Breast epithelium (tissue), 4 donors: ENCODE measurements at regions of chr1 and their contacts with region 1.

Region 1: DNA sequence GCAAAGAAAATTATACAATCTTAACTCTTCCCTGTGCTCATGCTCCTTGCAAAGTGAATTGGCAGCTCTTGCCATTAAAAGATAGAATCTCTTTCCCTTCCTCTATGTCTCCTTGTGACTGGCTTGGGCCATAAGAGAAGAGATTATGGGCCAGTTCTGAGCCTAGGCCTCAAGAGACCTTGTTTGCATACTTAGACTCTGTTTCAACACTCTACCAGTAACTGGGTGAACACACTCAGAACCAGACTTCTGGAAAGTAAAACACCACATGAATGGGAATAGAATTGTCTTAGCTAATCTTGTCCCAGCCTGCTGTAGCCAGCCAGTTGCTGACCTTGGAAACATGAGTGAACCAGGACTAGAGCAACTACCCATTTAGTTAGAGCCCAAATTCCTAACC is 15.3 kb upstream of the OR6K3 start:
- DNase-seq: no peak
- H3K4me3 ChIP-seq: no peak overlapping the region
- H3K27ac ChIP-seq: no peak overlapping the region
- H3K4me1 ChIP-seq: no peaks in the 10 kb centered on the region
- H3K27me3 ChIP-seq: no peaks in the 10 kb centered on the region
- CTCF ChIP-seq: no peak
- POLR2A ChIP-seq: no peak

Region 2: GRCh38 chr1:157240495-157241184 is 1495.2 kb before region 1 on chr1:
- intact Hi-C with region 1: no loop called
- DNase-seq: no peak
- H3K4me3 ChIP-seq: no peak overlapping the region
- H3K27ac ChIP-seq: no peak overlapping the region
- H3K4me1 ChIP-seq: no peaks in the 10 kb centered on the region
- H3K27me3 ChIP-seq: no peaks in the 10 kb centered on the region
- CTCF ChIP-seq: no peak
- POLR2A ChIP-seq: no peak

Region 3: DNA sequence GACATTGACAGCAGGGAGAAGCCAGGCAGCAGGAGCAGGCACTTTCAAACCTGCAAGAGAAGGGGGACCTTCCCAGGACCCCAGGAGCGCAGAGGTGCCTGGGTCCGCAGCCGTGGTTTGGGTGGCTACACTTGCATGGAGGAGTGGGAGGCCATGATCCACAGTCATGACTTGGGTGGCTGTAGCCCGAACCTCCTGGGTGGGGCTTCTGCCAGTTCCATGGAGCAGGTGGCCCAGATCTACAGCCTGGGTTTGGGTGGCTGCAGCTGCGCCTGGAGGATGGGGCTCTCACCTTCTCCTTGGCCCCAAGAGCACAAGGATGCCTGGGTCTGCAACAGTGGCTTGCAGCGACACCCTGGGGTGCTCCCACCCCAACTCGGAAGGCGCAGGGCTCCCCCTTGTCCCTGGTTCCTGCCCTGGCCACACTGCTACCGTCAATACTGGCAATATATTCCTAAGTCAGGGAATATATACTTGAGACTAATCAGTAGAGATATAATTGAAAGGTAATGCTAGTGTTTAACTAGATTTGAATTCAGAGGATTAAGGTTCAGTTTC is 16.4 kb after region 1 on chr1:
- intact Hi-C with region 1: loop called (anchors 2 kb)
- DNase-seq: no peak
- H3K4me3 ChIP-seq: no peak overlapping the region
- H3K27ac ChIP-seq: no peak overlapping the region
- H3K4me1 ChIP-seq: no peaks in the 10 kb centered on the region
- H3K27me3 ChIP-seq: no peaks in the 10 kb centered on the region
- CTCF ChIP-seq: no peak
- POLR2A ChIP-seq: no peak